ENCODE measurements at regions of chr9 and their contacts with region 1.

Region 1: DNA sequence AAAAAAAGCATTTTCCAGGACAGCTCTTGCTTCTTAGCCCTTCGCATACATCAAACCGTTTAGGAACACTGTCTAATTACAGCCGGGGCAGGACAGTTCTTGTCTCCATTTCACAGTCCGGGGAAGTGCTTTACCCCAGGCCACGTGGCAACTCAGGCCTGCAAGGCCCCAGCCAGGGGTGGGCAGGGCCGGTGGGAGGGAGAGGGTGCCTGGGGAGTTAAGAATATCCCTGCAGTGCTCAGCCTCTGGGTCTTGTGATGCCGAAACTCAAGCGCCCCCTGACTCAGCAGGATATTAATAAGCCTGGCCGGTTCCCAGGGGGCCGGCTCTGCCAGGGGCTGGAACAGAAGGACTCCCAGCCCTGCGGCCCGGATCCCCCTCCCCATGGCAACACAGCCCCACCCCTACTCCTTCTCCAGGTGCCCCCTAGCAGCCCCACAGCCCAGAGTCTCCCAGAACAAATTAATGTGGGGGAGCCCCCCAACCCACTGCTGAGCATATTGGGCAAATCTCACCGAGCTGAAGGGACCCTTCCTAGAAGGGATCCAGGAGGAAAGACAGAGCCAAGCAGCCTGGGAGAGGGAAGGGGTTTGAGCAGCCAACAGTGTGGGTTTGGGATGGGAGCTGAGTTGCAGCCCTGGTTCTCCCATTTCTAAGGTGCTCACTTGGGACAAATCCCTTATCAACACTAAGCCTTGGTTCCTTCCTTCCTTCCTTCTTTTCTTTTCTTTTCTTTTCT is 45.3 kb downstream of the PLPP7 start:
- DNase-seq: no peak
- ATAC-seq: no peak
- H3K4me3 Mint-ChIP-seq: no peak overlapping the region
- H3K27ac Mint-ChIP-seq: no peak overlapping the region
- H3K4me1 Mint-ChIP-seq: peaks cover 8% of the 10 kb centered on the region
- H3K27me3 Mint-ChIP-seq: no peaks in the 10 kb centered on the region

Region 2: GRCh38 chr9:130780865-130781504 is 553.8 kb before region 1 on chr9:
- CTCF ChIA-PET with region 1: no interaction called
- DNase-seq: no peak
- ATAC-seq: no peak
- H3K4me3 Mint-ChIP-seq: no peak overlapping the region
- H3K27ac Mint-ChIP-seq: no peak overlapping the region
- H3K4me1 Mint-ChIP-seq: no peaks in the 10 kb centered on the region
- H3K27me3 Mint-ChIP-seq: no peaks in the 10 kb centered on the region

Region 3: DNA sequence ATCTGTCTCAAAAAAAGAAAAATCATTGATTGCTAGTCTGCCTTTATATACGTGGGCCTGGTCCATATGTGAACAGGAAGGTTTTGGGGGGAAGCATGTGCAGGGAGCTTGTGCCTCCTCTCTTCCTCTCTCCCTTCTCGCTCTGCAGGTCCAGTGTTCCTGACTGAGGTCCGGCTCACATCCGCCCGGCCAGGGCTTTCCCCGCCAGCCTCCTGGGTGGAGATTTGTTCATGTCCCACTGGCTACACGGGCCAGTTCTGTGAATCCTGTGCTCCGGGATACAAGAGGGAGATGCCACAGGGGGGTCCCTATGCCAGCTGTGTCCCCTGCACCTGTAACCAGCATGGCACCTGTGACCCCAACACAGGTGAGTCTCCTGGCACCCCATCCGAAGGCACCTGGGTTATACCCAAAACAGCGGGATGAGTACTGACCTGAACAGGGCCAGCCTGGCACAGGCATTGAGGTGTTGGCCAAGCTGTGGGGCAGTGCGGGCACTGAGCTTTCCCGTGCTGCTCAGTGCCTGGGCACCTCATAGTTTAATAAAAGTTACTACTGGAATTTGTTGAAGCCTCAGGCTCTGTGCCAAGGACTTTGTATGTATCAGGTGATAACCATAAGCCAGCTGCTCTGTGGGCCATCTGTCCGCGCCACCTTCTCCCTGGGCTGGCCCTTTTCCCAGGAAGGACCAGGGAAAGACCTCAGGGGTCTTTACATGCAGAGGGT is 277.9 kb before region 1 on chr9:
- CTCF ChIA-PET with region 1: interaction called, 44 read pairs
- DNase-seq: no peak
- ATAC-seq: no peak
- H3K4me3 Mint-ChIP-seq: no peak overlapping the region
- H3K27ac Mint-ChIP-seq: no peak overlapping the region
- H3K4me1 Mint-ChIP-seq: no peaks in the 10 kb centered on the region
- H3K27me3 Mint-ChIP-seq: peaks cover 2% of the 10 kb centered on the region

Region 4: DNA sequence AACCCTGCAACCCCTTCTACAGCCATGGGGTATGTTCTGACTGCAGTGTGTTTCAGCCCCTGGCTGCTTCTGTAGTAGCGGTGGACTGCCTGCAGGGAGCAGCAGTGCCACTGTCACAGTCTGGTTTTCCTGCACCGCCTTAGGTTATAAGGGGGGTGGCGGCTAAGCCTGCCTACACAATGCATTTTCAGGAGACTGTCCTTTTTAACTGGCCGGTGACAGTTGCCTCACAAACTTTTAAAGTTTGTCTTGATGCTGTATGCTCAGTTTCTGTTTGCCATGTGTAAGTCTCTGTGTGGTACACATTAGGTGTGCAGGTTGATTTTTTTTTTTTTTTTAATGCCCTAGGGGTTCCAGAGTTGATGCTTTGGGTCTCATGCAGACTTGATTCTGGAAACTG is 156.4 kb before region 1 on chr9:
- CTCF ChIA-PET with region 1: interaction called, 154 read pairs
- DNase-seq: peak; percentile 86
- ATAC-seq: peak; percentile 99
- H3K4me3 Mint-ChIP-seq: no peak overlapping the region
- H3K27ac Mint-ChIP-seq: peak overlapping the region; percentile 69
- H3K4me1 Mint-ChIP-seq: peaks cover 20% of the 10 kb centered on the region
- H3K27me3 Mint-ChIP-seq: no peaks in the 10 kb centered on the region

Region 5: GRCh38 chr9:131246618-131247017 is 88.2 kb before region 1 on chr9:
- CTCF ChIA-PET with region 1: interaction called, 11 read pairs
- DNase-seq: no peak
- ATAC-seq: no peak
- H3K4me3 Mint-ChIP-seq: no peak overlapping the region
- H3K27ac Mint-ChIP-seq: no peak overlapping the region
- H3K4me1 Mint-ChIP-seq: peaks cover 5% of the 10 kb centered on the region
- H3K27me3 Mint-ChIP-seq: no peaks in the 10 kb centered on the region

Region 6: GRCh38 chr9:131270171-131271015 is 64.4 kb before region 1 on chr9:
- CTCF ChIA-PET with region 1: interaction called, 10 read pairs
- DNase-seq: peak; percentile 75
- ATAC-seq: peak; percentile 20
- H3K4me3 Mint-ChIP-seq: peak overlapping the region; percentile 99
- H3K27ac Mint-ChIP-seq: peak overlapping the region; percentile 92
- H3K4me1 Mint-ChIP-seq: peaks cover 57% of the 10 kb centered on the region
- H3K27me3 Mint-ChIP-seq: no peaks in the 10 kb centered on the region

Region 7: DNA sequence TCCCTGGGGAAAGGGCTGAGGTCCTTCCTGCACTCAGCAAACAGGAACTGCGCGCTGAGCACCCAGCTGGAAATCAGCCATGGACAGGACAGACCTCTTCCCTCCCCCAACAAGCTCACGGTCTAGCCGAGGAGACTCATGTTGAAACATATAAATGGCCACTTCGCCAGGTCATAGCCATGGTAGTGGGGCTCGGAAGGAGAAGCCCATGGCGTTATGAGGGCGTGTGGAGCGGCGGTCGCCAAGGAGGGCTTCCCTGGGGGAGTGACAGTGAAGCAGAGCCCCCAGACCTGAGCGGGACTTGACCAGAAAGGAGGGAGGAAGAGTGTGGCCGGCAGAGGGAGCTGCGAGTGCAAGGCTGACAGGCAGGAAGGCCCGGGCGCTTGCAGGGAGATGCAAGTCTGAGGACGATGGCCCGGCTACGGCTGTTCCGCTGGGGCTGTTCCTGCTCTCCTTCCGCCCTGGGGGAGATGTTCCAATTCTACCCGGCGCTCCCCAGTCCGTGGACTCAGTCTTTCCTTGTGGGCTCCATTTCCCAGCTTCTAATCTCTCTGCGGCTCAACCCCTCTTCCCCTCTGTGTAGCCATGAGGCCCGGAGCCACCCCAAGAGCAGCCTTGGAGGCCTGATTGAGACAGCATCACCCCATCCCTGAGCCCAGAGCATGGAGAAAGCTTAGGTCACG is 15.2 kb after region 1 on chr9:
- CTCF ChIA-PET with region 1: interaction called, 30 read pairs
- DNase-seq: peak; percentile 93
- ATAC-seq: peak; percentile 99
- H3K4me3 Mint-ChIP-seq: peak overlapping the region; percentile 11
- H3K27ac Mint-ChIP-seq: peak overlapping the region; percentile 72
- H3K4me1 Mint-ChIP-seq: peaks cover 12% of the 10 kb centered on the region
- H3K27me3 Mint-ChIP-seq: no peaks in the 10 kb centered on the region

Region 8: GRCh38 chr9:131678499-131679111 is 343.8 kb after region 1 on chr9:
- CTCF ChIA-PET with region 1: no interaction called
- DNase-seq: peak; percentile 95
- ATAC-seq: peak; percentile 95
- H3K4me3 Mint-ChIP-seq: peak overlapping the region; percentile 80
- H3K27ac Mint-ChIP-seq: peak overlapping the region; percentile 99
- H3K4me1 Mint-ChIP-seq: peaks cover 77% of the 10 kb centered on the region
- H3K27me3 Mint-ChIP-seq: no peaks in the 10 kb centered on the region

Measured in activated CD8-positive, alpha-beta memory T cell treated with anti-CD3 and anti-CD28 coated beads, Interleukin-2, amount 10 ng/mL, durations not matched to agents 7 days and 5 days (primary cell).